Pancreas (tissue), 10 donors: ENCODE measurements at regions of chr1 and their contacts with region 1.

Region 1: GRCh38 chr1:12619792-12620487 is 1.9 kb upstream of the DHRS3 start:
- DNase-seq: peak; percentile 78 to 94 (median 88)
- ATAC-seq: peak; percentile 38 to 67 (median 55)
- H3K4me3 ChIP-seq: peak overlapping the region in 3 of 4 donors; percentile 83 to 92 (median 84)
- H3K27ac ChIP-seq: peak overlapping the region in 3 of 4 donors; percentile 69 to 98 (median 97)
- H3K4me1 ChIP-seq: peaks cover 12 to 19% (median 14%) of the 10 kb centered on the region in 3 donors
- H3K27me3 ChIP-seq: no peaks in the 10 kb centered on the region
- CTCF ChIP-seq: peak; percentile 84 to 94 (median 92)

Region 2: GRCh38 chr1:12407050-12407961 is 212.6 kb before region 1 on chr1:
- intact Hi-C with region 1: loop called in 1 of 3 experiments (anchors 10 kb)
- DNase-seq: peak in 1 of 6 donors; percentile 28
- ATAC-seq: peak; percentile 82 to 89 (median 85)
- H3K4me3 ChIP-seq: no peak overlapping the region
- H3K27ac ChIP-seq: peak overlapping the region in 3 of 4 donors; percentile 10 to 67 (median 64)
- H3K4me1 ChIP-seq: peaks cover 29 to 52% (median 29%) of the 10 kb centered on the region in 3 donors
- H3K27me3 ChIP-seq: no peaks in the 10 kb centered on the region
- CTCF ChIP-seq: peak in 2 of 4 donors; percentile 17 to 23

Region 3: DNA sequence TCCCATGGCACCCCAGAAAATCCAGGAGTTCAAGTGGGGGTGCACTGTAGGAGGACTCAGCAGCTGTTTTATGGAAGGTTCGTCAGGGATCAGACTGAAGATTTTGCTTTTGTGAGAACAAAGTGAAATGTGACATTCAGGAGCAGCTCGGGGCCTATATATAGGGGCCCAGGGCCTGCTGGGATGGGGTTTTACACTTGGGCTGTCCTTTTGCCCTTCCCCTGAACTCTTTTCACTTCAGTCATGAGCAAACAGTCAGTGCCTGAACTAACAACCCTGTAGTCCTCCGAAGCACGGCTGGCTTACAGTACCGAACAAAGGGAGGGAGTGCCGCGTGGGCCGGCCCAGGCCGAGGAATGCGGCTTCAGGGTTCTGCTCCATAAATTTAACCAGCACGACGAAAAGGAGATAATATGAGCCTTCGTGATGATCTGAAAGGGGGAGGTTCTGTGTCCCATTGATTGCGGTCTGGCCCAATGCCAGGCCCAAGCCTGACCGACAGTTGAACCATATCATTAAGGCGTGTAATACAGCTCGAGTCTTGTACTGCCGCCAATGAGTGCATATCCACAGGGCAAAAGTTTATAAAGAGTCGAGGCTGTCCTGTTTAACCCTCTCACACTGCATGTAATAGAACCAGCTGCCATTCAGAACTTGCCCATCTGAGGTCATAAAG is 141.9 kb before region 1 on chr1:
- intact Hi-C with region 1: loop called in 1 of 3 experiments (anchors 10 kb)
- DNase-seq: peak; percentile 72 to 88 (median 80)
- ATAC-seq: peak; percentile 63 to 76 (median 73)
- H3K4me3 ChIP-seq: no peak overlapping the region
- H3K27ac ChIP-seq: peak overlapping the region; percentile 18 to 80 (median 49)
- H3K4me1 ChIP-seq: peaks cover 38 to 68% (median 54%) of the 10 kb centered on the region in 3 donors
- H3K27me3 ChIP-seq: no peaks in the 10 kb centered on the region
- CTCF ChIP-seq: no peak

Region 4: DNA sequence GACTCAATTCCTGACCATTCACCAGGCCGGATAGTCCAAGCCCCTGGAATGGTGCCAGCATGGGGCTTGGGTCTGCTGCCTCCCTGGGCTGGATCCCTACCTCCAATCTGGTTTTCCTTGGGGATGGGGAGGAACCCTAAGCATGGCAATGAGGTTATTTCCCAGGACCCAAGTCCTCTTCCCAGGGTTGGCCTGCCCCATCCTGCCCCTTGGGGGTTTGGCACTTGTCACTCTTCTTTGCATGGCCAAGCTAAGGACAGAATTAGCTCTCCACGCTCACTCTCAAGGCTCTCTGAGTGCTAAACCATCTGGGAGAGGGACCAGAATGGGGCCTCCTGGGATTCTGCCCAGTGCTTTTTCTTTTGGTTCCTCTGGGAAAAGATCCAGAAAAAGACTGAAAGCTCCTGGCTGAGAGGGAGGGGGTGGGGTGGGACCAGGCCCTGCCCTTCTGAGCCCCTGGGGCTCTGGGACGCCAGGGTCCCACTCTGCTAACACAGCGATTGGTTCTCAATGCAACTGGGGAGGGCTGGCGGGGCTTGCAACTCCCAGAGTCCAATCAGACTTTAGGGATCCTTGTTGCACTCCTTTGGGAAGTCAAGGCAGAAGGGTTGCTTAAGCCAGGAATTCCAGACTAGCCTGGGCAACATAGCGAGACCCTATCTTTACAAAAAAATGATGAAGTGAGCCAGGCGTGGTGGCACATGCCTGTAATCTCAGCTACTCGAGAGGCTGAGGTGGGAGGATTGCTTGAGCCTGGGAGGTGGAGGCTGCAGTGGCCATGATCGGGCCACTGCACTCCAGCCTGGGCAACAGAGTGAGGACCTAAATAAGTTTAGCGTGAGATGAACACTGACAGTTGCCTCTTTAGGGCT is 54.6 kb before region 1 on chr1:
- intact Hi-C with region 1: no loop called
- DNase-seq: peak in 1 of 6 donors; percentile 17
- ATAC-seq: peak in 1 of 4 donors; percentile 29
- H3K4me3 ChIP-seq: no peak overlapping the region
- H3K27ac ChIP-seq: no peak overlapping the region
- H3K4me1 ChIP-seq: no peaks in the 10 kb centered on the region
- H3K27me3 ChIP-seq: no peaks in the 10 kb centered on the region
- CTCF ChIP-seq: no peak